SK-N-SH (cell line): ENCODE measurements at regions of chr5 and their contacts with region 1.

Region 1: GRCh38 chr5:81117566-81117965 is 115.6 kb upstream of the CKMT2 start:
- DNase-seq: no peak
- H3K4me3 ChIP-seq: no peak overlapping the region
- H3K27ac ChIP-seq: no peak overlapping the region
- H3K4me1 ChIP-seq: peaks cover 0 to 4% of the 10 kb centered on the region in 2 experiments; a peak in 1 of 4 replicates
- H3K27me3 ChIP-seq: no peaks in the 10 kb centered on the region
- CTCF ChIP-seq: no peak
- EP300 ChIP-seq: no peak
- RAD21 ChIP-seq: no peak

Region 2: GRCh38 chr5:81105261-81105877 is 12.2 kb before region 1 on chr5:
- CTCF ChIA-PET with region 1: interaction called, 12 read pairs
- POLR2A ChIA-PET with region 1: no interaction called
- DNase-seq: no peak
- H3K4me3 ChIP-seq: no peak overlapping the region
- H3K27ac ChIP-seq: no peak overlapping the region
- H3K4me1 ChIP-seq: no peaks in the 10 kb centered on the region
- H3K27me3 ChIP-seq: no peaks in the 10 kb centered on the region; the same call in 1 of the 2 replicates
- CTCF ChIP-seq: no peak
- EP300 ChIP-seq: no peak
- RAD21 ChIP-seq: no peak